Right cardiac atrium (tissue), 5 donors: ENCODE measurements at regions of chr14 and their contacts with region 1.

Region 1: GRCh38 chr14:58060077-58060476 is 91.9 kb downstream of the ARMH4 start:
- DNase-seq: no peak
- ATAC-seq: no peak
- H3K4me3 ChIP-seq: no peak overlapping the region
- H3K27ac ChIP-seq: no peak overlapping the region
- H3K4me1 ChIP-seq: no peaks in the 10 kb centered on the region
- H3K27me3 ChIP-seq: no peaks in the 10 kb centered on the region

Region 2: DNA sequence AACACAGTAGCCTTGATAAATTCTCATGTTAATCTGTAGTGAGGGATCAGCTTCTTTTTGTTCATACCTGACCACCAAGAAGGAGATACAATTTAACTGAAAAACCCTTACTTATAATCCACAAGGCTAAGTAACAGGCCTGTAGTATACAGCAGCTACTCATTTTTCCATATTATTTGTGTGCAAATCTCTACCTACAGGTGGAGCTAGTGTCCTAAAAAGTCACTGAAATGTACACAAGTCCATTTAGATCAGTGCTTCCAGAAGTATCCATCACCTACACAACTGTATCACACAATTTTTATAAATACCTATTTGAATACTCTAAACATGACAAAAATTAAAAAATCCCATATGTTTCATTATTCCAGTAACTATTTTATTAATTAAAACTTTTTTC is 367.4 kb before region 1 on chr14:
- intact Hi-C with region 1: loop called in 1 of 4 experiments (anchors 10 kb)
- DNase-seq: no peak
- ATAC-seq: no peak
- H3K4me3 ChIP-seq: no peak overlapping the region
- H3K27ac ChIP-seq: no peak overlapping the region
- H3K4me1 ChIP-seq: no peaks in the 10 kb centered on the region
- H3K27me3 ChIP-seq: no peaks in the 10 kb centered on the region

Region 3: DNA sequence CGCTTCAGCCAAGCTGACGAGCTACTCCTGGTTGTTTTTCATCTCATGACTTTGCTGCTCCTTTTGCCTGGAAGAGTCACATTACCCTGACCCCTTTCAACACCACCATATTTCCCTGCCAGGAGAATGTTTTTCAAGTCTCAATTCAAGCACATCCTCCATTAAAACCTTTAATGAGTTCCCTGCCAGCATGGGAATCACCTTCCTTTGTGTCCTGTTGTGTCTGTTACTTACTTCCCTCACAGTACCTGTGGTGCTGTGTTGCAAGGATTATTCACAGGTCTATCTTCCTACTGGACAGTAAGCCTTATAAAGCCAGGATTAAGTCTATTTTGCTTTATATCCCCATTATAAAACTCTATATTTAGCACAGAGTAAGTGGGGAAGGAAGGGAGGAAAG is 180.6 kb before region 1 on chr14:
- intact Hi-C with region 1: loop called in 1 of 4 experiments (anchors 5 kb)
- DNase-seq: no peak
- ATAC-seq: no peak
- H3K4me3 ChIP-seq: no peak overlapping the region
- H3K27ac ChIP-seq: no peak overlapping the region
- H3K4me1 ChIP-seq: no peaks in the 10 kb centered on the region
- H3K27me3 ChIP-seq: no peaks in the 10 kb centered on the region

Region 4: DNA sequence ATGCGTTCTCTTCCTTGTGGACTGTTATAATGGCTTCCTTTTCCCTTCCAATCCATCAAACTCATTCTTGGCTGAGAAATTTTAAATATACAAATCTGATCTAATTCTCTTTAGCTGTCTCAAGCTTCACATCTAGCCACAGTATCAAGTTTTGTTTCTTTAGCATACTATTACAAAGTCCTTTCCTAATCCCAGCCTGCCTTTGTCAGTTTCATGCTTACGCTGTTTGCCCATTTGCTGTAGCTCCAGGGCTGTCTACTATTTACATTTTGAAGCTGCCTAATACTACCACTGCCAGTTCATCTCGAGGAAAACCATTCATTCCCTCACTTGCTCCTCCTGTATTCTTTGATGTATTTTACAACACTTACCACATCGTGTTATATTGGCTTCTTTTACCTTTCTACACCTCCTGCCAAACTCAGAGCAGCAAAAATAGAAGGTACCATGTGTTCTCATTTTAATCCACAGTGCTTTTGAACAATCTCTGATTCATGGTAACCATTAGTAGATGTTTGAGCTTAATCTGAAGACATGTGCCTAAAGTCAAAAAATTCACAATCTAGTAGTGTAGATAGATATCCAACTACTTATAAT is 281.2 kb after region 1 on chr14:
- intact Hi-C with region 1: no loop called
- DNase-seq: no peak
- ATAC-seq: no peak
- H3K4me3 ChIP-seq: no peak overlapping the region
- H3K27ac ChIP-seq: no peak overlapping the region
- H3K4me1 ChIP-seq: no peaks in the 10 kb centered on the region
- H3K27me3 ChIP-seq: no peaks in the 10 kb centered on the region